Naive thymus-derived CD4-positive, alpha-beta T cell (primary cell): ENCODE measurements at regions of chr19 and their contacts with region 1.

Region 1: GRCh38 chr19:4139614-4140236 is 13.7 kb upstream of the CREB3L3 start:
- DNase-seq: peak; percentile 64 to 92 (median 82)
- ATAC-seq: peak; percentile 96
- H3K4me3 ChIP-seq: no peak overlapping the region
- H3K4me3 Mint-ChIP-seq: peak overlapping the region in 9 of 10 donors; percentile 14 to 64 (median 30)
- H3K27ac ChIP-seq: no peak overlapping the region
- H3K27ac Mint-ChIP-seq: peak overlapping the region in 1 of 9 donors; percentile 32
- H3K4me1 ChIP-seq: peaks cover 0 to 6% of the 10 kb centered on the region in 2 donors
- H3K4me1 Mint-ChIP-seq: peaks cover 5 to 11% (median 10%) of the 10 kb centered on the region in 7 donors
- H3K27me3 ChIP-seq: no peaks in the 10 kb centered on the region
- H3K27me3 Mint-ChIP-seq: peaks cover 4 to 11% (median 6%) of the 10 kb centered on the region in 5 donors

Region 2: DNA sequence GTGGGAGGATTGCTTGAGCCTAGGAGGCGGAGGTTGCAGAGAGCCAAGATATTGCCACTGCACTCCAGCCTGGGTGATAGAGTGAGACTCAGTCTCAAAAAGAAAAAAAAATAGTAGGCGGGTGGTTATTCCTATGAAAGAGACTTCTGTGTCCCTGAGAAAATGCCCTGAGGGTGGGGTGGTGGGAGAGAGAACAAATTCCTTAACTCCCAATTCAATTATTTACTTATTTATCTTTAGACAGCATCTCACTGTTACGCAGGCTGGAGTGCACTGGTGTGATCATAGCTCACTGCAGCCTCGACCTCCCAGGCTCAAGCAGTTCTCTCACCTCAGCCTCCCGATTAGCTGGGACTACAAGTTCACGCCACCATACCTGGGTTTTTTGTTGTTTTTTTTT is 144.1 kb before region 1 on chr19:
- CTCF ChIA-PET with region 1: interaction called, 6 read pairs
- POLR2A ChIA-PET with region 1: no interaction called
- intact Hi-C with region 1: loop called (anchors 1 kb)
- DNase-seq: no peak
- ATAC-seq: no peak
- H3K4me3 ChIP-seq: no peak overlapping the region
- H3K4me3 Mint-ChIP-seq: no peak overlapping the region
- H3K27ac ChIP-seq: no peak overlapping the region
- H3K27ac Mint-ChIP-seq: no peak overlapping the region
- H3K4me1 ChIP-seq: no peaks in the 10 kb centered on the region
- H3K4me1 Mint-ChIP-seq: peaks cover 3 to 8% (median 5%) of the 10 kb centered on the region in 7 donors
- H3K27me3 ChIP-seq: no peaks in the 10 kb centered on the region
- H3K27me3 Mint-ChIP-seq: no peaks in the 10 kb centered on the region

Region 3: DNA sequence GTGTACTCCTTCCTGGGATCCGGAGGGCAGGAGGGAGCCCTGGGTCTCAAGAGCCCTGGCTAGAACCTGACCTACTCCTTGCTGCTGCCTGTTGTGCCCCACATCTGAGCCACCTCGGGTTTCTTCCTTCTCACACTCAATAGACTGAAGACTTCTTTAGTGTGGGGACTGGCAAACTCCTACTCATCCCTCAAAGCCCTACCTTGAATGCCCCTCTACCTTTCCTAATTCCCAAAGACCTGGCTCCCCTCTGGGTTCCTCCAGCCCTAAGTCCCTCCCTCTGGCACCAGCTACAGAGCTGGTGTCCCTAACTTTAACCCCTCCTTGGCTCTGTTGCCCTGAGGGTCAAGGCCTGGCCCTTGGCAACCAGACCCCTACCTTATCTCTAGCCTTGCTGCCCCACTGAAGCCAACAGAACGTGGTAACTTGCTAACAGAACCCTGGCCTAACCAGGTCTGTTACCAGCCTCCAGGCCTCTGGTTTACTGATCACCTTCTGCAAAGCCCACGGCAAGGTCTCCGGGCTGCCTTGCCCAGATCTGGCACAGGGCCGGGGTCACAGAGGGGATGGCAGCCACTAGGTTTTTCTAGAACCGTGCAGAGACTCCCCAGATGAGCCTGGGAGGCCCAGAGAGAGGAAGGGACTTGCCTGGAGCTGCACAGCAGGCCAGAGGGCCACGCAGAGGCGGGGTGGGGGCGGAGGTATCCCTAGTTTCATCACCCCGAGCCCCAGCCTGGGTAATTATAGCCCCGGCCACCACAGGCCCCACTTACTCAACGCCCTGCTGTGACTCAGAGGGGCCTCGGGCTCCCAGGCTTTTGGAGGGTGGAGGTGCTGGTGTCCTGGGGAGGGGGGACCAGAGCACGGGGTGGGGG is 88.3 kb before region 1 on chr19:
- CTCF ChIA-PET with region 1: interaction called, 4 read pairs
- POLR2A ChIA-PET with region 1: no interaction called
- intact Hi-C with region 1: loop called in 1 of 2 experiments (anchors 2 kb)
- DNase-seq: peak in 1 of 9 donors; percentile 48
- ATAC-seq: peak; percentile 71
- H3K4me3 ChIP-seq: no peak overlapping the region
- H3K4me3 Mint-ChIP-seq: peak overlapping the region in 5 of 10 donors; percentile 10 to 41 (median 33)
- H3K27ac ChIP-seq: no peak overlapping the region
- H3K27ac Mint-ChIP-seq: peak overlapping the region in 8 of 9 donors; percentile 22 to 81 (median 65)
- H3K4me1 ChIP-seq: peaks cover 0 to 11% of the 10 kb centered on the region in 2 donors
- H3K4me1 Mint-ChIP-seq: peaks cover 27 to 43% (median 36%) of the 10 kb centered on the region in 7 donors
- H3K27me3 ChIP-seq: no peaks in the 10 kb centered on the region
- H3K27me3 Mint-ChIP-seq: no peaks in the 10 kb centered on the region

Region 4: GRCh38 chr19:4108767-4109625 is 30.7 kb before region 1 on chr19:
- CTCF ChIA-PET with region 1: interaction called, 9 read pairs
- POLR2A ChIA-PET with region 1: interaction called, 3 read pairs
- intact Hi-C with region 1: loop called in 1 of 2 experiments (anchors 1 kb)
- DNase-seq: peak; percentile 35 to 83 (median 79)
- ATAC-seq: peak; percentile 67
- H3K4me3 ChIP-seq: peak overlapping the region; percentile 11
- H3K4me3 Mint-ChIP-seq: peak overlapping the region; percentile 54 to 80 (median 74)
- H3K27ac ChIP-seq: peak overlapping the region; percentile 72
- H3K27ac Mint-ChIP-seq: peak overlapping the region; percentile 86 to 97 (median 94)
- H3K4me1 ChIP-seq: peaks cover 44 to 53% of the 10 kb centered on the region in 2 donors
- H3K4me1 Mint-ChIP-seq: peaks cover 34 to 85% (median 55%) of the 10 kb centered on the region in 7 donors
- H3K27me3 ChIP-seq: no peaks in the 10 kb centered on the region
- H3K27me3 Mint-ChIP-seq: no peaks in the 10 kb centered on the region

Region 5: DNA sequence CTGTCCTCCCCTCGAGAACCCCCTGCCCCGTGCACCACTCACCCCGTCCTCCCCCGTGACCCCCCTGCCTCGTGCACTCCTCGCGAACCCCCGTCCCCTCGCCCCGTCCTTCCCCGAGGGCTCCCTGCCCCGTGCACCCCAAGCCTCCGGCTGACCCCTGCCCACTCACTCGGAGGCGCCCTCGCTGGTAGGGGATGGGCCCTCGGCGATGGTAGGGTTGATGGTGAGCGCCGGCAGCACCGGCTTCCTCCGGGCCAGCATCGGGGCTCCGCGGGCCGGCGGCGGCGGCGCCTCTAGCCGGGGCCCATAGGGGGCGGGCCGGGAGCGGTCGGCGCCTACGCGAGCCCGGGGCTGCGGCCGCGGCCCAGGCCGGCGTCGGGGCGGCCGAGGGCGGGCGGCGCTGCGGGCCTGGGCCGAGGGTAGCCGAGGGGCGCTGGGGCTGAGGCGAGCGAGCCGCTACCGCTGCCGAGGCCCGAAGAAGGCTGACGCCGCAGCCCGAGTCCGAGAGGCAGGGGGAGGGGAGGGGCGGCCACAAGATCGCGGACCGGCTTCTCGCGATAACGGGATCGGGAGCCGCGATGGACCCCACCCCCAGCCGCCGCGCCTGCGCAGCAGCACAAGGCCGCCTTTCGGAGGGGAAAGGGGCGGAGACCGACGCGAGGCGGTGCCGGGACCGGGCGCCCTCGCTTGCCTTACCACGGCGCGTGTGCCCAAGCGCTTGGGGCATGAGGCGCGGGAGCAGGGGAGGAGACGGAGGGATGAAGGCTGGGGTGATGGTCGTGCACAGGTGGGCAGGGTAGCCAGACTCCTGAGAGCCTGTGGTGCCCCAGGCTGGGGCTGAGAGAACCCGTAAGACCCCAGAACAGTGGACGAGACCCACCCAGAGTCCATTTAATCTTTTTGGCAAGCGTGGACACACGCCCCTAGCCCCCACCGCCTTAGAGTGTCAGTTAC is 15.8 kb before region 1 on chr19 and contains the start of gene MAP2K2:
- CTCF ChIA-PET with region 1: interaction called, 4 read pairs
- POLR2A ChIA-PET with region 1: no interaction called
- intact Hi-C with region 1: loop called in 1 of 2 experiments (anchors 1 kb)
- DNase-seq: peak; percentile 91 to 99 (median 96)
- ATAC-seq: peak; percentile 96
- H3K4me3 ChIP-seq: peak within 1 kb of the TSS; percentile 77
- H3K4me3 Mint-ChIP-seq: peak within 1 kb of the TSS; percentile 89 to 100 (median 94)
- H3K27ac ChIP-seq: peak within 1 kb of the TSS; percentile 80
- H3K27ac Mint-ChIP-seq: peak within 1 kb of the TSS; percentile 89 to 97 (median 93)
- H3K4me1 ChIP-seq: peaks cover 10 to 11% of the 10 kb centered on the region in 2 donors
- H3K4me1 Mint-ChIP-seq: peaks cover 17 to 31% (median 25%) of the 10 kb centered on the region in 7 donors
- H3K27me3 ChIP-seq: no peaks in the 10 kb centered on the region
- H3K27me3 Mint-ChIP-seq: no peaks in the 10 kb centered on the region
- total RNA-seq, gene MAP2K2: 87.4 to 162 (median 123) TPM

Region 6: GRCh38 chr19:4208385-4209094 is 68.8 kb after region 1 on chr19:
- CTCF ChIA-PET with region 1: no interaction called
- POLR2A ChIA-PET with region 1: no interaction called
- intact Hi-C with region 1: loop called in 1 of 2 experiments (anchors 1 kb)
- DNase-seq: no peak
- ATAC-seq: no peak
- H3K4me3 ChIP-seq: no peak overlapping the region
- H3K4me3 Mint-ChIP-seq: no peak overlapping the region
- H3K27ac ChIP-seq: no peak overlapping the region
- H3K27ac Mint-ChIP-seq: no peak overlapping the region
- H3K4me1 ChIP-seq: no peaks in the 10 kb centered on the region
- H3K4me1 Mint-ChIP-seq: peaks cover 0 to 6% (median 3%) of the 10 kb centered on the region in 7 donors
- H3K27me3 ChIP-seq: no peaks in the 10 kb centered on the region
- H3K27me3 Mint-ChIP-seq: peaks cover 0 to 3% (median 0%) of the 10 kb centered on the region in 5 donors